H1 (cell line): ENCODE measurements at regions of chr9 and their contacts with region 1.

Region 1: GRCh38 chr9:130243015-130243734 is 22.4 kb upstream of the HMCN2 start:
- DNase-seq: peak in 1 of 2 experiments; percentile 98
- H3K4me3 ChIP-seq: peak overlapping the region in 1 of 4 experiments; percentile 27; a peak in 3 of 8 replicates
- H3K27ac ChIP-seq: no peak overlapping the region
- H3K4me1 ChIP-seq: peaks cover 0 to 9% (median 4%) of the 10 kb centered on the region in 4 experiments; a peak in 4 of 7 replicates
- H3K27me3 ChIP-seq: peaks cover 0 to 4% (median 0%) of the 10 kb centered on the region in 4 experiments; a peak in 2 of 7 replicates
- CTCF ChIP-seq: peak in 2 of 3 experiments; percentile 83 to 97; a peak in 3 of 4 replicates
- EP300 ChIP-seq: no peak
- POLR2A ChIP-seq: no peak
- RAD21 ChIP-seq: peak; percentile 62 to 75

Region 2: GRCh38 chr9:130118841-130119518 is 124.2 kb before region 1 on chr9:
- CTCF ChIA-PET with region 1: interaction called, 14 read pairs
- POLR2A ChIA-PET with region 1: no interaction called
- DNase-seq: no peak
- H3K4me3 ChIP-seq: no peak overlapping the region
- H3K27ac ChIP-seq: no peak overlapping the region
- H3K4me1 ChIP-seq: peaks cover 5 to 15% (median 10%) of the 10 kb centered on the region in 4 experiments
- H3K27me3 ChIP-seq: no peaks in the 10 kb centered on the region
- CTCF ChIP-seq: no peak
- EP300 ChIP-seq: no peak
- POLR2A ChIP-seq: no peak
- RAD21 ChIP-seq: no peak

Region 3: DNA sequence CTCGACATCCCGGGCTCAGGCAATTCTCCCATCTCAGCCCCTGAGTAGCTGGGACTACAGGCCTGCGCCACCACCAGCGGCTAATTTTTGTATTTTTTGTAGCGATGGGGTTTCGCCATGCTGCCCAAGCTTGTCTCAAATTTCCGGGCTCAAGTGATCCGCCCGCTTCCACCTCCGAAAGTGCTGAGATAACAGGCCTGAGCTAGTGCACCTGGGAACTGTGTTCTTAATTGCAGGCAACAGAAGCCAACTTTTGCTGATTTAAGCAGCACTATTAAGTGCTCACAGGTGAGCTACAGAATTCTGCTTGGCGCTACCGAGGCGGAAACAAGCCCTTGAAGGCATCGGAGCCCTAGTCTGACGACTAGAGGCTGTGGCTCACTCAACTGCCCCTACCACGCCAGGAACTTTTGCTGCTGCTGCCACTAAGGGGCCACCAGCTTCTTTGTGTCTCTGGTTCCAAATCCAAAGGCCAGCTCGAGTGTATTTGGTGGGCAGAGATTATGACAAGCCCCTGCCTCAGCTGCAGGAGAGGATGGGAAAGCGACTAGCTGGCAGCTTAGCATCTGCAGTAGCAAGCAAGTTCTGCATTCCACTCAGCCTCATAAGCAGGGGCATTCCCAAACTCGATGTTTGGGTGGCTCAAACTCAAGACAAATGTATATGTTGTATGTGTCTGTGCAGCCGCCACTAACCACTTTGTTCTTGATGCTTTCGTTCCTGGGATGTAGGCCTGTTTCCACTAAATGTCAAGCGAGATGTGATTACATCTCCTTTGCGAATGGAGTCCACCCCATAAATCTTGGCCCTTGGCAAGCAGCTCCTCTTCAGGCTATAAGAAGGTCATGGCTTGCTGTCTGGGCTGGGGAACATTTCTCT is 11.8 kb after region 1 on chr9:
- CTCF ChIA-PET with region 1: interaction called, 36 read pairs
- POLR2A ChIA-PET with region 1: no interaction called
- DNase-seq: no peak
- H3K4me3 ChIP-seq: no peak overlapping the region
- H3K27ac ChIP-seq: no peak overlapping the region
- H3K4me1 ChIP-seq: no peaks in the 10 kb centered on the region
- H3K27me3 ChIP-seq: no peaks in the 10 kb centered on the region
- CTCF ChIP-seq: no peak
- EP300 ChIP-seq: no peak
- POLR2A ChIP-seq: no peak
- RAD21 ChIP-seq: no peak

Region 4: DNA sequence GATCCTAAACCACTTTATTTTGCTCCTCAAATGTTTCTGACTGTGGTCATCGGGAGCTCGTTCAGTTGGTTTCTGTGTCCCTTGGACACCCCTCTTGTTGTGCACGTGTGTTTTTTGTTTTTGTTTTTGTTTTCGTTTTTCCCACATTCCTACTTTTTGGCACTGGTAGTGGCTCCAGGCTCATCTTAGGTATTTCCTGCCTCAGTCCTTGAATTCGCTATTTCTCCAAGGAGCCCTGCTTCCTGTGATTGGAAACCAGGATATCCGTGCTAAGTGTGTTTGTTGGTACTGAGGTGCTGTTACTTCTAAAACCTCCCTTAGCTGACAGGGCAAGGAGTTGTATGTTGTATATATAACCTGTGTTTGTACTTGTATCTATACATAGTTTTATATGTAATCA is 28.3 kb after region 1 on chr9:
- CTCF ChIA-PET with region 1: interaction called, 16 read pairs
- POLR2A ChIA-PET with region 1: no interaction called
- DNase-seq: no peak
- H3K4me3 ChIP-seq: no peak overlapping the region
- H3K27ac ChIP-seq: no peak overlapping the region
- H3K4me1 ChIP-seq: peaks cover 8 to 18% (median 12%) of the 10 kb centered on the region in 4 experiments
- H3K27me3 ChIP-seq: peaks cover 0 to 5% (median 4%) of the 10 kb centered on the region in 4 experiments; a peak in 6 of 7 replicates
- CTCF ChIP-seq: no peak
- EP300 ChIP-seq: no peak
- POLR2A ChIP-seq: no peak
- RAD21 ChIP-seq: no peak

Region 5: DNA sequence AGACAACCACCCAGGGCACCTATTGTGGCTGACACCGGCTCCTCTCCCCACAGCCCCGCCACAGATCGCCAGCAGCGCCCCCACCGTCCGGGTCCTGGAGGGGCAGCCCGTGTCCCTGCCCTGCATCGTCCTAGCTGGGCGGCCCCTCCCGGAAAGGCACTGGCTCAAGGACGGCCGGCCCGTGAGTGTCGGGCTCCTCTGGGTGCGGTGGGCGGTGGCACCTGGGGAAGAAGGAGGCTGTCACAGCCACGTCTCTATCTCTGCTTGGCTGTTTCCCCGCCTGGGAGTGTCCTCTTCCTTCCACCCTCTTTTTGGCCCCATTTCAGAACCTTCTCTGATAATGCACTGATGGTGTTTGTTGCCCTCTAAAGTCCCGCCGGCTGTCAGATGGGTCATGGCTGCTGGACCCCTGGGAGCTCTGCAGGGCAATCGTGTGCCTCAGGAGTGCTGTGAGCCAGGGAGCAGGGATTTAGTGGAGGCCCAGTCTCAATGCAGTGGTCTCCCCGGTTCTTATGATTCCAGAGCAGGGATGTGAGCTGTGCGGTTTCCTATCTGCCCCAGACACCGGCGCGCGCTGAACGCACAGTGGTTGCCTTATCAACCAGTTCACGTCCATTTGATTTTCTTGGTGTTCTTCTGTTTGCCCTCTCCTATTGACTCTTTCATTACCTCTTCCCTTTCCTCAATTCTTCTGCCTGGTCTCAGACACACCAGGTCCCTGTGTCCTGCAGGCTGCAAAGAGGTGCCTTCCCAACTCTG is 77.7 kb after region 1 on chr9:
- CTCF ChIA-PET with region 1: interaction called, 47 read pairs
- POLR2A ChIA-PET with region 1: no interaction called
- DNase-seq: peak in 1 of 2 experiments; percentile 79
- H3K4me3 ChIP-seq: no peak overlapping the region
- H3K27ac ChIP-seq: no peak overlapping the region
- H3K4me1 ChIP-seq: peaks cover 0 to 7% (median 1%) of the 10 kb centered on the region in 4 experiments; a peak in 4 of 7 replicates
- H3K27me3 ChIP-seq: no peaks in the 10 kb centered on the region
- CTCF ChIP-seq: peak; percentile 37 to 62 (median 44); a peak in 3 of 4 replicates
- EP300 ChIP-seq: no peak
- POLR2A ChIP-seq: no peak
- RAD21 ChIP-seq: peak in 1 of 2 experiments; percentile 42; a peak in 3 of 4 replicates